Panc1 (cell line): ENCODE measurements at regions of chr1 and their contacts with region 1.

Region 1: GRCh38 chr1:86616871-86617270 is 70.0 kb downstream of the CLCA4 start:
- DNase-seq: no peak
- ATAC-seq: no peak
- H3K4me3 ChIP-seq: no peak overlapping the region
- H3K27ac ChIP-seq: no peak overlapping the region
- H3K4me1 ChIP-seq: no peaks in the 10 kb centered on the region
- H3K27me3 ChIP-seq: peaks cover 13% of the 10 kb centered on the region
- CTCF ChIP-seq: no peak

Region 2: DNA sequence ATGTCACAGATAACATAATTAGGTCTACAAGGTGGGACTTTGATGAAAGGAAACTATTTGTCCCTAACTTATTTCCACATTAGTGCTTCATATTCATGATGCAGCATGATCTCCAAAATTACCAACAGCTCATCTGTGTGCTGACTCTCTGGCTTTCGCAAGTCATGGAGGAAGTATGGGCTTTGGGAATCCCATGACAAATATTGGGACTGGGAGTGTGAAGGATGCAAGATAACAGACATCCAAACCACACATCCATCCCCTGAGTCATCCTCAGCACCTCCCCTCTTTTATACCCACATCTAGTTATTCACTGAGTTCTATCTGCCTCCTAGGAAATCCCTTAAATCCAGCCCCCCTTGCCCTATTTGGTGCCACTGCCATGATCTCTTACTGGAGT is 357.5 kb before region 1 on chr1:
- CTCF ChIA-PET with region 1: interaction called, 12 read pairs
- POLR2A ChIA-PET with region 1: no interaction called
- in situ Hi-C with region 1: no loop called
- intact Hi-C with region 1: no loop called
- DNase-seq: no peak
- ATAC-seq: no peak
- H3K4me3 ChIP-seq: no peak overlapping the region
- H3K27ac ChIP-seq: no peak overlapping the region
- H3K4me1 ChIP-seq: no peaks in the 10 kb centered on the region
- H3K27me3 ChIP-seq: peaks cover 25% of the 10 kb centered on the region
- CTCF ChIP-seq: no peak

Region 3: DNA sequence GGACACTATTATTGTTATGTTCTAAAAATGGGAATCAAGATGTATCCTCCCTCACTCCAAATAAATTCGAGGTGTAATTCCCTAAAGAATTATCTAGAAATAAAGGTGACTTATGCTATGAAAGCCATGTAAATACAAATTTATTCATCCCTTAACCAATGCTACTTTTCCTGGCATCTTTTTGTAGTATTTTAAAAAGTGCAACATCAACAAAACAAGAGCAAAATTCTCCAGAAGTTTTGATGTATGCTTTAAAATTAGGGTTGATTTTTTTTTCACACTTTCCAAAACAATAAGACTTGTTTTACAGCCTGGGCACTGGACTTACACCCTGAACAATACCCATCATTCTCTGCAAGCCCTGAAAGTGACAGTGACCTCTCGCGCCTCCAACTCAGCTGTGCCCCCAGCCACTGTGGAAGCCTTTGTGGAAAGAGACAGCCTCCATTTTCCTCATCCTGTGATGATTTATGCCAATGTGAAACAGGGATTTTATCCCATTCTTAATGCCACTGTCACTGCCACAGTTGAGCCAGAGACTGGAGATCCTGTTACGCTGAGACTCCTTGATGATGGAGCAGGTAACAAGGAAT is 169.6 kb before region 1 on chr1:
- CTCF ChIA-PET with region 1: no interaction called
- POLR2A ChIA-PET with region 1: no interaction called
- in situ Hi-C with region 1: no loop called
- intact Hi-C with region 1: no loop called
- DNase-seq: no peak
- ATAC-seq: no peak
- H3K4me3 ChIP-seq: no peak overlapping the region
- H3K27ac ChIP-seq: no peak overlapping the region
- H3K4me1 ChIP-seq: no peaks in the 10 kb centered on the region
- H3K27me3 ChIP-seq: peaks cover 6% of the 10 kb centered on the region; the same call in 1 of the 2 replicates
- CTCF ChIP-seq: no peak